Activated T-helper 1 cell treated with anti-CD3 and anti-CD28 coated beads, Interleukin-12 subunit alpha, Interleukin-12 subunit beta, Interleukin-2, Interleukin-4 antibody, amounts not matched to agents 30 ng/mL and 10 ng/mL and 1 ng/mL, durations not matched to agents 14 hours and 24 hours and 36 hours (primary cell): ENCODE measurements at regions of chr11 and their contacts with region 1.

Region 1: DNA sequence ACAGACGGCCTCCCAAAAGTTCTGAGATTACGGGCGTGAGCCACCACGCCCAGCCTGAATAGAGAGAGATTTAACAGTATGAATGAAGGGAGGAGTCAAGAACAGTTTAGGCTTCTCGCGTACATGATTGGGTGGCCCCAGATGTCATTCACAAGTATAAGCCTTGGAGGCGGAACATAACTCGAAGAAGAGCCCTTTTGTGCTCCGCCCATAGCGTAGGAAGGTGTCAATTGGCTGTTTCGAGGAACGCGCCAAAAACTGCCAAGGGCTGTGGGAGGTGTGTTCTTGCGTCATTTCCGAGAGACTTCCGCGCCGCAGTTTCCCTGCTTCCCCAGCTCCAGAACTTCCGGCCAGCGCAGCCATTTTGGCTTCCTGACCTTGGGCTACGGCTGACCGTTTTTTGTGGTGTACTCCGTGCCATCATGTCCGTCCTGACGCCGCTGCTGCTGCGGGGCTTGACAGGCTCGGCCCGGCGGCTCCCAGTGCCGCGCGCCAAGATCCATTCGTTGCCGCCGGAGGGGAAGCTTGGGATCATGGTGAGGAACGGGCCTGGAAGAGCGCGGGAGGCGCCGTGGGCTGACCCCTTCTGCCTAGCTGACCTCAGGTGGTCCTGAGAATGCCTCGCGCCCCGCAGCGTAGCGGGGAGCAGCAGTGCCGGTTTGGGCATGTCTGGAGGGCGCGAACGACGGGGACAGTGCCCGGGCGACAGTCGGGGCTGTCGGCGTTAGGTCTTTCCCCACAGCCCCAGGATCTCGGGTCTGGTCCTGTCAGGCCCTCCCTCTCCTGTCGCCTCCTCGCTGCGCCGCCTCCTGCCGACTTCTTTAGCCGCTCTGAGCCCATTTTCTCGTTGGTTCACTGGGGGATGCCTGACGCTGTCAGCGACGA is at the start of gene COX8A:
- DNase-seq: peak; percentile 96
- H3K4me3 Mint-ChIP-seq: peak within 1 kb of the TSS; percentile 100
- H3K27ac Mint-ChIP-seq: peak within 1 kb of the TSS; percentile 97
- H3K4me1 Mint-ChIP-seq: peaks cover 17% of the 10 kb centered on the region
- H3K27me3 Mint-ChIP-seq: peaks cover 8% of the 10 kb centered on the region
- total RNA-seq, gene COX8A: 289 and 291 TPM in 2 replicates

Region 2: GRCh38 chr11:63916837-63917691 is 57.4 kb before region 1 on chr11 and contains the start of gene RCOR2:
- intact Hi-C with region 1: loop called (anchors 1 kb)
- DNase-seq: peak; percentile 45
- H3K4me3 Mint-ChIP-seq: peak within 1 kb of the TSS; percentile 82
- H3K27ac Mint-ChIP-seq: no peak within 1 kb of the TSS
- H3K4me1 Mint-ChIP-seq: peaks cover 9% of the 10 kb centered on the region
- H3K27me3 Mint-ChIP-seq: peaks cover 13% of the 10 kb centered on the region
- total RNA-seq, gene RCOR2: 0.21 and 0.34 TPM in 2 replicates

Region 3: GRCh38 chr11:64000026-64000739 is 25.7 kb after region 1 on chr11:
- intact Hi-C with region 1: loop called (anchors 1 kb)
- DNase-seq: peak; percentile 71
- H3K4me3 Mint-ChIP-seq: no peak overlapping the region
- H3K27ac Mint-ChIP-seq: no peak overlapping the region
- H3K4me1 Mint-ChIP-seq: no peaks in the 10 kb centered on the region
- H3K27me3 Mint-ChIP-seq: no peaks in the 10 kb centered on the region

Region 4: DNA sequence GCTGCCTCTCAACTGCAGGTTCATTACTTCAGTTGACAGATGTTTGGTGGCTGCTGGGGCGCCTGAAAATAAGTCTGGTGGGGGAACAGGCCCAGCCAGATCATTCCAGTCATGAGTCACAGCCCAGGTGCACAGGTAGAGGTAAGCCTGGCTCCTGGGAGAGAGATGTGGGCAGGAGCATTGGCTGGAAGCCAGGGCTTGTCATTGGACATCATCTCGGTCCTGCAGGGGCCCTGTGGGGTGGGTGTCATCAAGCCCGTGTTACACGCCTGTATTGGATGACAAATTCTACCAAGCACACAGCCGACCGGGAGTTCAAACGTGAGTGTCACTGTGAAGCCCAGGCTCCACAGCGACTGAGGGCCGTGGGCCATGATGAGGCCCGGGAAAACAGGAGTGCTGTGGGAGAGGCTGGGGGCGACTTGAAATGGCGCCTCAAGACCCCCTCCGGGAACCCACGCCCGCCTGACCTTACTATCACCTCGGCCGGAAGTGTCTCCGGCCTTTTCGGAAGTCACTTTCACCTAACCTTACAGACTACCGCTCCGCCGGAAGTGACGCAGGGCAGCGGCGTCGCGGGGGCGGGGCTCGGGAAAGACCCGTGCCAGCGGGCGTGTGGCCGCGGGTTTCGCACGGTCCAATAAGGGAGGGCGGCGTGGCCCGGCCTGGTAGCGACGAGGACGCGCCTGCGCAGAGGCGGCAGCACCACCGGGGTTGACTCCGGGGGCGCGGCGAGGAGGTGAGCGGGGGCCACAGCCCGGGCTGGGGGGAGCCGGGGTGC is 266.1 kb after region 1 on chr11 and contains the start of gene FKBP2:
- intact Hi-C with region 1: loop called (anchors 1 kb)
- DNase-seq: peak; percentile 99
- H3K4me3 Mint-ChIP-seq: peak within 1 kb of the TSS; percentile 94
- H3K27ac Mint-ChIP-seq: peak within 1 kb of the TSS; percentile 94
- H3K4me1 Mint-ChIP-seq: peaks cover 36% of the 10 kb centered on the region
- H3K27me3 Mint-ChIP-seq: no peaks in the 10 kb centered on the region
- total RNA-seq, gene FKBP2: 32.6 and 34.3 TPM in 2 replicates

Region 5: DNA sequence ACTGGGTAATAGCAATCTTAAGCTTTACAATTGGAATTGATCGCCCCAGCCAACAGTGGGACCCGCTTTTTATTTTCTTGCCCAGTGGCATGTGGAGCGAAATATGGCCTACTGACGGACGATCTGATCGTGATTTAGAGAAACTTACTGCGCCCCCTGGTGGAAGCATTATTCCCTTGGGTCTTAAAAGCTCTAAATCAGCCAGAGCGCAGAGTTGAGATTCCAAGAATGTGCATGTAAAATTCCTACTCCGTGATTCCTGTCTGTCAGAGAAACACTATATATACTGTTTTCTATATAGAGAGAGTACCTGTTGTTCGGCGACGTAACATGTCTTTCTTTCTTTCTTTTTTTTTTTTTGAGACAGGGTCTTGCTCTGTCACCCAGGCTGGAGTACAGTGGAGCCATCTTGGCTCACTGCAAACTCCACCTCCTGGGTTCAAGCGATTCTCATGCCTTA is 1355.5 kb after region 1 on chr11:
- intact Hi-C with region 1: no loop called
- DNase-seq: peak; percentile 67
- H3K4me3 Mint-ChIP-seq: no peak overlapping the region
- H3K27ac Mint-ChIP-seq: no peak overlapping the region
- H3K4me1 Mint-ChIP-seq: peaks cover 16% of the 10 kb centered on the region
- H3K27me3 Mint-ChIP-seq: peaks cover 4% of the 10 kb centered on the region